ENCODE measurements at regions of chr11 and their contacts with region 1.

Region 1: DNA sequence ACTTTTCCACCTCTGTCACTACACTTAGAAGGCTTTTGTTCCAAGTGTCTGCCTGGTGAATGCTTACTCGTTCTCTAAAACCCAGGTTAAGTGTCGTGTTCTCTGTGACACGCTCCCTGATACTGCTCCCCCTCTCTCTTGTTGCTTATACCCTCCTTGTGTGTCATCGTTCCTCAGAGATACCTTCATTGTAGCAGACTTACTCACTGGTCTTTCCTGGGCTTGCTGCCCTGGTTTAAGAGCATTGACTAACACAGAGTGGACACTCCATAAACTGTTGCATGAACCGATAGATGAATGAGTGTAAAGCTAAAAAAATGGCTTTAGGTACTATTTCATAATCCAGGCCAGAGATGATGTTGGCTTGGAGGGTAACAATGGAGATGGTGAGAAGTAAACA is 171.3 kb downstream of the GRIK4 start:
- DNase-seq: no peak
- H3K4me3 ChIP-seq: no peak overlapping the region
- H3K27ac ChIP-seq: no peak overlapping the region
- H3K4me1 ChIP-seq: no peaks in the 10 kb centered on the region
- H3K27me3 ChIP-seq: no peaks in the 10 kb centered on the region
- CTCF ChIP-seq: no peak
- POLR2A ChIP-seq: no peak

Region 2: DNA sequence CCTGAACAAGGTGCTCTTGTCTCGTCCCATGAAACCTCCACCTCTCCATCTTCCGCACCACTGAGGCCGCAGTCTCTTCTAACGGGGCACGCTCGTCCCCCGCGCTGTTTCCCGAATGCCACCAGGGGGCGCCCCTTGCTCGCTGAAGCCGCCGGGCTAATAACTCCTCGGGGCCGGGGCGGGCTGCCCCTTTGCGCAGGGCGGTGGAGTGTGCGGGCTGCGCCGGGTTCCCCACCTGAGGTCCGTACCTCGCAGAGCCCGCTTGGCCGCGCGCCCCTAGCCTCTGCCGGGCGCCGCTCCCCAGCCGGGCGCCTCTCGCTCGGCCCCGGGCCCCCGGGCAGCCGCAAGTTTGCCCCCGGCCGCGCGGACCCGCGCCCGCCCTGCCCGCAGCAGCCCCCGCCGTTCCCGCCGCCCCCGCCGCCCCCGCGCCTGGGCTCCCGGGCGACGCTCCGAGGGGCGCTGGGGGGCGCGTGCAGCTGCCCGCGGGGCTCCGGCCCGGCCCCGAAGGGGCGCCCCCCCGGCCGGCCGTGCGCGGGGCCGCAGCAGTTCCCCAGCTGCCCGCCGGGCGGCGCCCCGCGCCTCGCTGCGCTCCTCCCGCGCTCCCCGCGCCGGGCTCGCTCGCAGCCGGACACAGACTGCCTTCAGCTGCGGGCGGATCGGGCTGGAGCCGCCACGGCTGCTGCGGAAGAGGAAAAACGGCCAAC is 171.6 kb before region 1 on chr11 and contains the start of gene GRIK4:
- intact Hi-C with region 1: loop called (anchors 10 kb)
- DNase-seq: peak; percentile 63 to 89
- H3K4me3 ChIP-seq: peak within 1 kb of the TSS; percentile 38 to 78 (median 53)
- H3K27ac ChIP-seq: no peak within 1 kb of the TSS
- H3K4me1 ChIP-seq: no peaks in the 10 kb centered on the region
- H3K27me3 ChIP-seq: no peaks in the 10 kb centered on the region
- CTCF ChIP-seq: peak; percentile 84 to 94 (median 89)
- POLR2A ChIP-seq: no peak
- total RNA-seq, gene GRIK4: 0.29 to 0.66 TPM in 2 of 3 donors, not detected in the other

Region 3: DNA sequence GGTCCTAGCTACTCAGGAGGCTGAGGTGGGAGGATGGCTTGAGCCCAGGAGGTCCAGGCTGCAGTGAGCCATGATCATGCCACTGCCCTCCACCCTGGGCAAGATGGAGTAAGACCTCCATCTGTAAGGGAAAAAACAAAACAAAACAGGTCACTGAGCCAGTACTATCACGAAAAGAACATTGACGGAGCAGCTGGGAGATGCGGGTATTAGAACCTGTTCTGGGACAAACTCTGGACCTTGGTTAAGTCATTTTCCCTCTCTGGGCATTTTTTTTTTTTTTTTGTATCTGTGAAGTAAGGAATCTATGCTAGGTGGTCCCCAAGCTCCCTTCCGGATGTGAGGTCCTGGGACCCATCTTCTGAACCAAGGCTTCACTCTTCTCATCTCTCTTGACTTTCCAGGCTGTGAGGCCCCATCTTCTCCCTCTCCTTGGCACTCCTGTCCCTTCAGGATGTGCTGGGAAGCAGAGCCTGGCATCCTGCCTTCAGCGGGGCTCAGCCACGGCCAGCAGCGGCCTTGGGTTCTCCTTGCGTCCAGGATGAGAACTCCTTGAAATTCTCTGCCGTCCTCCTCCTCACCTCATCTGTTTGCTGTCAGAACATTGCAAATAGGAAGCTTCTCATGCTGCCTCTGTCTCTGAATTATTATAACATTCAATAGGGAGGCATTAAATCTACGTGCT is 40.5 kb before region 1 on chr11:
- intact Hi-C with region 1: no loop called
- DNase-seq: no peak
- H3K4me3 ChIP-seq: no peak overlapping the region
- H3K27ac ChIP-seq: no peak overlapping the region
- H3K4me1 ChIP-seq: no peaks in the 10 kb centered on the region
- H3K27me3 ChIP-seq: no peaks in the 10 kb centered on the region
- CTCF ChIP-seq: no peak
- POLR2A ChIP-seq: no peak